CD8-positive, alpha-beta T cell (primary cell): ENCODE measurements at regions of chr1 and their contacts with region 1.

Region 1: DNA sequence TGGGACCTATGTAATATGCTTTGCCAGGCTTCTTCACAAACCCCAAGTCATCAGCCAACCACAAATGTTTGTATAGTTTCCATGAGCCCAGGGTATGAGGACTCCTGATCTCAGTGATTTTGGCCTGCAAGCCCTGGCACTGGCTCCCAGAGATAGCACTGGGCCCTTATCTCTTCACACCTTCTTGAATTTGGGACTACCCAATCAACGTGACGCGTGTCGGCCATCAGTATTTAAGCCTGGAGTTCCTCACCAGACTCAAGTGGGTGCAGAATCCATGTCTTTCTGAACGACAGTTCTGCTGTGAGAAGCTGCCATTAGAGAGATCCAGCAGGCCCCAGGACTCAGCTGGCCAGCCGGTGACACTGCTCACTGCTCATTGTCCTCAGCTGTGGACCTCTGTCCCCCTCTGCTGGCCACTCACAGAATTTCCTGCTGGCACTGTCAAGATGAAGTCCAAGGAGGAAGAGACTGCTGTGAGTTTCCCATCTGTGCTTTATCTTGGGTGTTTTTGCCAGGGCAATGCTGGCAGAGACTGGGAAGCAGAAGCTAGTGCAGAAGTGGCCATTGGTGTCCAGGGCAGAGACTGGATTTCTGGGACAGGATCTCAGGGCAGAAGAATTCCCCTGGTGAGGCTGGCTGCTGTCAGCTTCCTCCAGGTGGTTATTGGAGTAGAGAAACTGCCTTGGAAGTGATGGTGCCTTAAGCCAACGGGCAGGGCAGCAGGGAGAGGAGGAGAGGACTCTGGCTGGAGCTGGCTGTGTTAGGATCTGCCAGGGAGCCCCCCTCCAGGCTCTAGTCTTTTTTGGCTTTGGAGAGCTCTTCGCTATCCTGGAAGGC is 28.4 kb downstream of the TMCC2 start:
- DNase-seq: peak; percentile 73 to 91 (median 83)
- ATAC-seq: peak; percentile 99
- H3K4me3 ChIP-seq: no peak overlapping the region
- H3K4me3 Mint-ChIP-seq: no peak overlapping the region
- H3K27ac ChIP-seq: no peak overlapping the region
- H3K27ac Mint-ChIP-seq: no peak overlapping the region
- H3K4me1 ChIP-seq: no peaks in the 10 kb centered on the region
- H3K4me1 Mint-ChIP-seq: no peaks in the 10 kb centered on the region
- H3K27me3 ChIP-seq: no peaks in the 10 kb centered on the region
- H3K27me3 Mint-ChIP-seq: no peaks in the 10 kb centered on the region
- CTCF ChIP-seq: peak; percentile 95

Region 2: DNA sequence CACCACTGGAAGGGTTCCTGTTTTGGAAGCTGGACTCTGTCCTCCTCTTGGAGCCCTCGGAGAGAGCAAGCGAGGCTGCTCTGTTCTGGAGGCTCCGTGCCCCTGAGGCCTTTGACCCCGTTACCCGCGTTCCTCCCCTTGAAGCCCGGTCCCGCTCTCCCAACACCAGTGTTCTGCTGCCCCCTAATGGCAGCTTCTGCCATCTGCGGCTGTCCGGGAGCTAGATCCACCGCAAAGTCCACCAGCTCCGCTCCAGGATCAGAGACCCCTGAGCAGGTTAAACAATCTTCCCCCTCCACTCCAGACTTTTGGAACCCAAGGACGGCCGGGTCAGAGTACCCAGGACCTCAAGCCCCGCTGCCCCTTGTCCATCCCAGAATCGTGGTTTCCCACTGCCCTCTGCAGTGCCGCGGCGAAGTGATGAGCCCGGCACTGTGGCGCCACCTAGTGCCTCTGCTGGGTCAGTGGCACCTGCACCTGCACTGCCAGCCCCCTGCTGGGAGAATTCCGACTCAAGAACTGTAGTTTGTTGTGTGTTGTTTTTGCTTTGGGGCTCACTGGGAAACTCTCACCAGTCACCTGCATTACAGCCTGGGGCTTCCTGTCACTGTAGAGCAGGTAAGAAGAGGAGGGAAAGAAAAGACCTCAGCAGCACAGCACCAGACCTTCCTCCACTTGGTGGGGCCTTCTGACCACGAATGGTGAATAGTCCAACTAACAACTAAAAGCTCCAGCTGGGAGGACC is 449.0 kb before region 1 on chr1:
- CTCF ChIA-PET with region 1: no interaction called
- POLR2A ChIA-PET with region 1: no interaction called
- intact Hi-C with region 1: loop called in 1 of 2 experiments (anchors 5 kb)
- DNase-seq: peak; percentile 69 to 90 (median 83)
- ATAC-seq: peak; percentile 96
- H3K4me3 ChIP-seq: peak overlapping the region; percentile 53 to 59
- H3K4me3 Mint-ChIP-seq: peak overlapping the region; percentile 88
- H3K27ac ChIP-seq: no peak overlapping the region
- H3K27ac Mint-ChIP-seq: no peak overlapping the region
- H3K4me1 ChIP-seq: peaks cover 12% of the 10 kb centered on the region
- H3K4me1 Mint-ChIP-seq: peaks cover 20% of the 10 kb centered on the region
- H3K27me3 ChIP-seq: no peaks in the 10 kb centered on the region
- H3K27me3 Mint-ChIP-seq: no peaks in the 10 kb centered on the region
- CTCF ChIP-seq: peak; percentile 100

Region 3: DNA sequence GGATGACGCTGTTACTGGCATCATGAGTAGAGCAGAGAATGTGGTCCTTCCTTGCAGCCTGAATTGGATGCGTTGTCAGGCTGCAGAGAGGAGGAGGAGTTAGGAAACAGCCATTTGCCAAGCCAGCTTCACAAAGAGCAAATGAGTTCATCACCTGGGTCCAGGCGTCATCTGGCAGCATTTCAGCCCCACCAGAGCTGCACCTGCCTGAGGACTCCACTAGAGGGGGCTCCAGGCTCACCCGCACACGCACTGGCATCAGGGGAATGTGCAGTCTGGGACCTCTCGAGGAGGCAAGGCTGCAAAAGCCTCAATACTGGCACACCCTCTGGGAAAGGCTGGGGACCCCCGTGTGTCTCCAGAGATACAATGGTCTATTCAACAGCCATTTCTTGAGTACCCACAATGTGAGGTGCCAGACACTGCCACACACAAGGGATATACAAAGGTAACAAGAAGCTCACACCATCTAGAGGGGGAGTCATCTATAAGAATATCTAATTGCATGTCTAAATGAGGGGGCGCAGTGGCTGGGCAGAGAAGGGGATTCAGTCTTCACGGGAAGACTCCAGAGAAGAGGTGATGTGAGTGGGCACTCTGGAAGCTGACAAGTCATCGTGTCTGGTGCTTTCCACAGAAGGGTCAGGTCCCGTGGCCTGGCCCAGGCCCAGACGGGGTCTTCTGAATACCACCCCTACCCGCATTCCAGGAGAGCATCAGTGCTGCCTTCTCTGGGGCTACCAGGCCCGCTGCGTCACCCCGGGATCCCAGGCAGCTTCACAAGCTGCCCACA is 266.7 kb before region 1 on chr1:
- CTCF ChIA-PET with region 1: interaction called, 15 read pairs
- POLR2A ChIA-PET with region 1: no interaction called
- intact Hi-C with region 1: loop called (anchors 1 to 5 kb)
- DNase-seq: peak; percentile 10 to 67 (median 46)
- ATAC-seq: peak; percentile 87
- H3K4me3 ChIP-seq: no peak overlapping the region
- H3K4me3 Mint-ChIP-seq: no peak overlapping the region
- H3K27ac ChIP-seq: no peak overlapping the region
- H3K27ac Mint-ChIP-seq: no peak overlapping the region
- H3K4me1 ChIP-seq: peaks cover 4% of the 10 kb centered on the region
- H3K4me1 Mint-ChIP-seq: peaks cover 15% of the 10 kb centered on the region
- H3K27me3 ChIP-seq: no peaks in the 10 kb centered on the region
- H3K27me3 Mint-ChIP-seq: no peaks in the 10 kb centered on the region
- CTCF ChIP-seq: peak; percentile 63

Region 4: GRCh38 chr1:205141236-205142101 is 114.7 kb before region 1 on chr1:
- CTCF ChIA-PET with region 1: interaction called, 22 read pairs
- POLR2A ChIA-PET with region 1: no interaction called
- intact Hi-C with region 1: loop called (anchors 1 to 2 kb)
- DNase-seq: peak; percentile 48 to 86 (median 77)
- ATAC-seq: peak; percentile 91
- H3K4me3 ChIP-seq: no peak overlapping the region
- H3K4me3 Mint-ChIP-seq: no peak overlapping the region
- H3K27ac ChIP-seq: no peak overlapping the region
- H3K27ac Mint-ChIP-seq: peak overlapping the region; percentile 3
- H3K4me1 ChIP-seq: peaks cover 4% of the 10 kb centered on the region
- H3K4me1 Mint-ChIP-seq: peaks cover 9% of the 10 kb centered on the region
- H3K27me3 ChIP-seq: no peaks in the 10 kb centered on the region
- H3K27me3 Mint-ChIP-seq: no peaks in the 10 kb centered on the region
- CTCF ChIP-seq: peak; percentile 81

Region 5: DNA sequence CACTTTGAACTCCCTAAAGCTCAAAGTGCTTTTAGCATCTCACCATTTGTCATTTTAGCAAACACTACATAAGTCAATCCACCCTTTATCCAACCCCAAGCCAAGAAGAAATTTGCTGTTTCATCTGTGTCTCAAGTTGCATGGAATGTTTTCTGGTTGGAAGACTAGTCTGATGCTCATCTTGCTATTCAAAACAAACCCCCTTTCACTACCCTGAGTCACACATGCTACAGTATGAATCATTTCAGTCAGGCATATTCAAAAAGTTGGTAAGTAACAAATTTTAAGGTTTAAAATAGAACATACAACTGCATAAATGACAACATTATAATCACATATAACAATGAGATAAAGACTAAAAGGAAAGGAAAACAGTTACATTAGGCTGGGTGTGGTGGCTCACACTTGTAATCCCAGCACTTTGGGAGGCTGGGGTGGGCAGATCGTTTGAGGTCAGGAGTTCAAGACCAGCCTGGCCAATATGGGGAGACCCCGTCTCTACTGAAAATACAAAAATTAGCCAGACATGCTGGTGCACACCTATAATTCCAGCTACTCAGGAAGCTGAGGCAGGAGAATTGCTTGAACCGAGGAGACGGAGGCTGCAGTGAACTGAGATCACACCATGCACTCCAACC is 83.3 kb before region 1 on chr1:
- CTCF ChIA-PET with region 1: interaction called, 7 read pairs
- POLR2A ChIA-PET with region 1: no interaction called
- intact Hi-C with region 1: loop called in 1 of 2 experiments (anchors 5 kb)
- DNase-seq: no peak
- ATAC-seq: no peak
- H3K4me3 ChIP-seq: no peak overlapping the region
- H3K4me3 Mint-ChIP-seq: no peak overlapping the region
- H3K27ac ChIP-seq: no peak overlapping the region
- H3K27ac Mint-ChIP-seq: no peak overlapping the region
- H3K4me1 ChIP-seq: peaks cover 15% of the 10 kb centered on the region
- H3K4me1 Mint-ChIP-seq: peaks cover 19% of the 10 kb centered on the region
- H3K27me3 ChIP-seq: no peaks in the 10 kb centered on the region
- H3K27me3 Mint-ChIP-seq: no peaks in the 10 kb centered on the region
- CTCF ChIP-seq: no peak

Region 6: DNA sequence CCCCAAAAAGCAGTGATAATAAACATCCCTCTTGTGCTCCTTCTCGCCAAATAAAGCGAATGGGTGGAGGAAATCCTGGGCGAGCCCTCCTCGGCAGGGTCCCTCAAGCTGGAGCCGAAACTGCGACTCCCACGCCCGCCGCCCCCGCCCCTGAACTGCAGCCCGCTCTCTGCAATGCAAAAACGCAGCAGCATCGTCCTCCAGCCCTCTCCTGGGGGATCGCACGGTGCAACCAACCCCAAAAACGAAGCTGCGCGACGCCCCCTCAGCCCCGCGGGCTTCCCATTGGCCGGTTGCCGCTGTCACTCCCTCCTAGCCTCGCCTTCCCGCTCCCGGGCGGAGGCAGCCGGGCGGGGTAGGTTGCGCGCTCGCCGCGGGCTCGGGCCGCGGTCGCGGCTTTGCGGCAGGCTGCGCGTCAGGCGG is 28.6 kb before region 1 on chr1 and contains the start of gene TMCC2:
- CTCF ChIA-PET with region 1: interaction called, 203 read pairs
- POLR2A ChIA-PET with region 1: interaction called, 16 read pairs
- intact Hi-C with region 1: loop called (anchors 1 kb)
- DNase-seq: peak; percentile 59 to 92 (median 85)
- ATAC-seq: peak; percentile 82
- H3K4me3 ChIP-seq: peak within 1 kb of the TSS; percentile 60 to 70
- H3K4me3 Mint-ChIP-seq: peak within 1 kb of the TSS; percentile 91
- H3K27ac ChIP-seq: no peak within 1 kb of the TSS
- H3K27ac Mint-ChIP-seq: peak within 1 kb of the TSS; percentile 82
- H3K4me1 ChIP-seq: peaks cover 12% of the 10 kb centered on the region
- H3K4me1 Mint-ChIP-seq: peaks cover 31% of the 10 kb centered on the region
- H3K27me3 ChIP-seq: no peaks in the 10 kb centered on the region
- H3K27me3 Mint-ChIP-seq: peaks cover 5% of the 10 kb centered on the region
- CTCF ChIP-seq: no peak
- total RNA-seq, gene TMCC2: 1.5 to 2.0 TPM

Region 7: GRCh38 chr1:205273551-205273982 is 17.4 kb after region 1 on chr1:
- CTCF ChIA-PET with region 1: interaction called, 19 read pairs
- POLR2A ChIA-PET with region 1: no interaction called
- intact Hi-C with region 1: no loop called
- DNase-seq: peak; percentile 76 to 94 (median 86)
- ATAC-seq: peak; percentile 88
- H3K4me3 ChIP-seq: peak overlapping the region in 1 of 2 experiments; percentile 44
- H3K4me3 Mint-ChIP-seq: peak overlapping the region; percentile 61
- H3K27ac ChIP-seq: no peak overlapping the region
- H3K27ac Mint-ChIP-seq: peak overlapping the region; percentile 83
- H3K4me1 ChIP-seq: peaks cover 46% of the 10 kb centered on the region
- H3K4me1 Mint-ChIP-seq: peaks cover 40% of the 10 kb centered on the region
- H3K27me3 ChIP-seq: no peaks in the 10 kb centered on the region
- H3K27me3 Mint-ChIP-seq: no peaks in the 10 kb centered on the region
- CTCF ChIP-seq: peak; percentile 95